ENCODE measurements at regions of chr1 and their contacts with region 1.

Region 1: DNA sequence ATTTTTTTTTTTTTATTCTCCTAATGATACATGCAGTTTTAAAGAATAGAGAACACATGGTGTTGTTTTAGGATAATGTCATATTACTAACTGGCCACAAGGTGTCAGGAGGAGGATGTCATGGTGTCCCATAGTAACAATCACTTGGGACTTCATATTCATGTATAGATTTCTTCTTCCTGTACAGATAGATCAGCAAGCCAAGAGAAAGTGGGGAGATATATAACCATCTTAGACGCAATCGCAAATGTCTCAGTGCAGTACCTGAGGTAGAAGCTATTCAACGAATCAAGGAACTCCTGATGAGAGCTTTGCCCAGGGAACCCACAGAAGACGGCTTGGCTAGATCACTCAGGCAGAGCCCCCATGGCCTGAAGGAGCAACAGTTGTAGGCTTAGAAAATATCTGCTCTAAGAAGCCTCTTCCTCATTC is 12.3 kb downstream of the OR2T11 start:
- DNase-seq: peak; percentile 64
- ATAC-seq: peak; percentile 85
- H3K4me3 ChIP-seq: no peak overlapping the region
- H3K27ac ChIP-seq: no peak overlapping the region
- H3K4me1 ChIP-seq: no peaks in the 10 kb centered on the region
- H3K27me3 ChIP-seq: 0 out of 2 replicates have a peak, but pooled peaks cover 12% of the 10 kb centered on the region
- CTCF ChIP-seq: peak; percentile 77

Region 2: GRCh38 chr1:247936415-247936814 is 686.2 kb before region 1 on chr1:
- CTCF ChIA-PET with region 1: no interaction called
- POLR2A ChIA-PET with region 1: no interaction called
- intact Hi-C with region 1: loop called (anchors 5 kb)
- DNase-seq: peak; percentile 19
- ATAC-seq: no peak
- H3K4me3 ChIP-seq: no peak overlapping the region; the same call in 1 of the 2 replicates
- H3K27ac ChIP-seq: no peak overlapping the region
- H3K4me1 ChIP-seq: peaks cover 4% of the 10 kb centered on the region; the same call in 1 of the 2 replicates
- H3K27me3 ChIP-seq: no peaks in the 10 kb centered on the region
- CTCF ChIP-seq: no peak

Region 3: GRCh38 chr1:248243204-248243603 is 379.4 kb before region 1 on chr1:
- CTCF ChIA-PET with region 1: no interaction called
- POLR2A ChIA-PET with region 1: no interaction called
- intact Hi-C with region 1: loop called (anchors 10 kb)
- DNase-seq: peak; percentile 86
- ATAC-seq: peak; percentile 85
- H3K4me3 ChIP-seq: peak overlapping the region; percentile 37; the same call in 1 of the 2 replicates
- H3K27ac ChIP-seq: no peak overlapping the region
- H3K4me1 ChIP-seq: no peaks in the 10 kb centered on the region
- H3K27me3 ChIP-seq: peaks cover 5% of the 10 kb centered on the region; the same call in 1 of the 2 replicates
- CTCF ChIP-seq: peak; percentile 94

Region 4: GRCh38 chr1:248686815-248687214 is 64.2 kb after region 1 on chr1:
- CTCF ChIA-PET with region 1: no interaction called
- POLR2A ChIA-PET with region 1: no interaction called
- intact Hi-C with region 1: loop called (anchors 1 kb)
- DNase-seq: peak; percentile 66
- ATAC-seq: peak; percentile 87
- H3K4me3 ChIP-seq: no peak overlapping the region
- H3K27ac ChIP-seq: no peak overlapping the region
- H3K4me1 ChIP-seq: peaks cover 11% of the 10 kb centered on the region
- H3K27me3 ChIP-seq: peaks cover 4% of the 10 kb centered on the region; the same call in 1 of the 2 replicates
- CTCF ChIP-seq: peak; percentile 84

Region 5: DNA sequence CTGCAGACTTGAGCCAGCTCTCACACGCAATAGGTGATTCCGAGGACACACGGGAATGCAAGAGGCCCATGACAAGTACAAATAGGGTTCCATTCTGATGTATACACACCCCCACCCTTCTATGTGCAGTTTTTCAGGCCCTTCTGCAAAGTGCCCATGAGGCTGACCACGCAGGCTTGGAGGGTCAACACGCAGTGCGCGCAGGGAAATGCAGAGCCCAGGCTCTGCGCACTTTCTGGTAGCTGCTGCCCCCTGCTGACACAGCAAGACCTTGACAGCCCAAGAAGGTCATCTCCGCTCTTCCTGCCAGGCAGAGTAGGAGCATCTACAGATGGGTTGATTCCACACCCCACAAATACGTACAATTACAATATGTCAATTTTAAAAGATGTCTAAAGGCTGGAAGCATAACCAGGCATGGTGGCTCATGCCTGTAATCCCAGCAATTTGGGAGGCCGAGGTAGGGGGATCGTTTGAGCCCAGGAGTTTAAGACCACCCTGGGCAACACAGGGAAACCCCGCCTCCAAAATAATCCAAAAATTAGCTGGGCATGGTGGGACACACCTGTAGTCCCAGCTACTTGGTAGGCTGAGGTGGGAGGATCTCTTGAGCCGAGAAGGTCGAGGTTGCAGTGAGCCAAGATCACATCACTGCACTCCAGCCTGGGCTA is 184.6 kb after region 1 on chr1:
- CTCF ChIA-PET with region 1: interaction called, 3 read pairs
- POLR2A ChIA-PET with region 1: no interaction called
- intact Hi-C with region 1: loop called (anchors 1 kb)
- DNase-seq: peak; percentile 60
- ATAC-seq: peak; percentile 39
- H3K4me3 ChIP-seq: no peak overlapping the region
- H3K27ac ChIP-seq: no peak overlapping the region
- H3K4me1 ChIP-seq: peaks cover 22% of the 10 kb centered on the region
- H3K27me3 ChIP-seq: no peaks in the 10 kb centered on the region
- CTCF ChIP-seq: peak; percentile 90